Naive thymus-derived CD4-positive, alpha-beta T cell (primary cell): ENCODE measurements at regions of chr19 and their contacts with region 1.

Region 1: GRCh38 chr19:47243776-47244547 is 12.4 kb upstream of the CCDC9 start:
- DNase-seq: peak; percentile 80 to 94 (median 86)
- ATAC-seq: peak; percentile 69
- H3K4me3 ChIP-seq: peak overlapping the region; percentile 42
- H3K4me3 Mint-ChIP-seq: peak overlapping the region in 7 of 10 donors; percentile 68 to 86 (median 85)
- H3K27ac ChIP-seq: peak overlapping the region; percentile 28
- H3K27ac Mint-ChIP-seq: peak overlapping the region in 6 of 9 donors; percentile 61 to 95 (median 90)
- H3K4me1 ChIP-seq: peaks cover 35 to 37% of the 10 kb centered on the region in 2 donors
- H3K4me1 Mint-ChIP-seq: peaks cover 9 to 33% (median 25%) of the 10 kb centered on the region in 7 donors
- H3K27me3 ChIP-seq: no peaks in the 10 kb centered on the region
- H3K27me3 Mint-ChIP-seq: peaks cover 0 to 6% (median 0%) of the 10 kb centered on the region in 5 donors

Region 2: GRCh38 chr19:47047763-47048405 is 196.1 kb before region 1 on chr19:
- CTCF ChIA-PET with region 1: no interaction called
- POLR2A ChIA-PET with region 1: no interaction called
- intact Hi-C with region 1: loop called in 1 of 2 experiments (anchors 2 kb)
- DNase-seq: peak; percentile 41 to 80 (median 58)
- ATAC-seq: peak; percentile 57
- H3K4me3 ChIP-seq: peak overlapping the region; percentile 86
- H3K4me3 Mint-ChIP-seq: peak overlapping the region; percentile 89 to 100 (median 97)
- H3K27ac ChIP-seq: peak overlapping the region; percentile 79
- H3K27ac Mint-ChIP-seq: peak overlapping the region; percentile 82 to 96 (median 93)
- H3K4me1 ChIP-seq: peaks cover 6 to 7% of the 10 kb centered on the region in 2 donors
- H3K4me1 Mint-ChIP-seq: peaks cover 10 to 22% (median 16%) of the 10 kb centered on the region in 7 donors
- H3K27me3 ChIP-seq: no peaks in the 10 kb centered on the region
- H3K27me3 Mint-ChIP-seq: peaks cover 0 to 2% (median 0%) of the 10 kb centered on the region in 5 donors

Region 3: DNA sequence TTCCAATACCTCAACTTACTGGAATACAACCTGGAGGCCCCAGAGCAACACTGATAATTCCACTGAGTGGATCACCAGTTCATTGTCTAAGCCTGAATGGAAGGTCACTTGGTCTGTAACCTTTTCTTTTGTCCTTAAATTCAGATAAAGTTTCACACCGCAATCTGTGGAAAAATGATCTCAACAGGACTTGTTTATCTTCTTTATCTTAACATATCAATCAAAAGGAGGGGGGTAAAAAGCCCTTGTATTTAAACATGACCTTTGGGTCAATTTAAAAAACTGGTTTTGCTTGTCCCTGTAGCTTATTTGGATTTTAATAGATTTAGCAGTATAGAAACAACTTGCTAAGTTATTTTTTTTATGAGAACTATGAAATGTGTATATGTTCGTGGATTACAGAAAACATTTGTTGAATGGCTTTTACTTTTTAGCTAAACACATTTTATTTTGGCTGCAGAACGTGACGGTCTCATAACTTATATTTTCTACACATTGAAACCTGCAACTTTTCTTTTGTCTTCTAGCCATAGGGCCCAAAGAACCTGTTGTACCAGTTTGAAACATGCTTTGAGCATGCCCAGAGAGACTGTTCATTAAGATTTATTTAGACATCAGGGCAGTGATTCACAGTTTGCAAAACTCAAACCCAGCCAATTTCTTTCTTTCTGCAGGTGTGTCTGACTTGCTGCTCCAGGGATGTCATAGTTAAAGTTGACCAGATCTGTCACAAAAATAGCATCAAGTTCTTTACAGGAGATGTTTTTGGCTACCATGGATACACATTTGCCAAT is 91.5 kb before region 1 on chr19:
- CTCF ChIA-PET with region 1: interaction called, 175 read pairs
- POLR2A ChIA-PET with region 1: interaction called, 50 read pairs
- intact Hi-C with region 1: loop called (anchors 1 kb)
- DNase-seq: no peak
- ATAC-seq: no peak
- H3K4me3 ChIP-seq: no peak overlapping the region
- H3K4me3 Mint-ChIP-seq: no peak overlapping the region
- H3K27ac ChIP-seq: no peak overlapping the region
- H3K27ac Mint-ChIP-seq: peak overlapping the region in 3 of 9 donors; percentile 60 to 88 (median 61)
- H3K4me1 ChIP-seq: peaks cover 24 to 53% of the 10 kb centered on the region in 2 donors
- H3K4me1 Mint-ChIP-seq: peaks cover 26 to 75% (median 61%) of the 10 kb centered on the region in 7 donors
- H3K27me3 ChIP-seq: no peaks in the 10 kb centered on the region
- H3K27me3 Mint-ChIP-seq: no peaks in the 10 kb centered on the region

Region 4: GRCh38 chr19:47190167-47190727 is 53.7 kb before region 1 on chr19:
- CTCF ChIA-PET with region 1: interaction called, 13 read pairs
- POLR2A ChIA-PET with region 1: interaction called, 26 read pairs
- intact Hi-C with region 1: loop called (anchors 1 to 2 kb)
- DNase-seq: peak in 8 of 9 donors; percentile 52 to 77 (median 64)
- ATAC-seq: peak; percentile 53
- H3K4me3 ChIP-seq: no peak overlapping the region
- H3K4me3 Mint-ChIP-seq: peak overlapping the region; percentile 48 to 83 (median 72)
- H3K27ac ChIP-seq: peak overlapping the region; percentile 25
- H3K27ac Mint-ChIP-seq: peak overlapping the region; percentile 72 to 98 (median 95)
- H3K4me1 ChIP-seq: peaks cover 37 to 77% of the 10 kb centered on the region in 2 donors
- H3K4me1 Mint-ChIP-seq: peaks cover 41 to 81% (median 71%) of the 10 kb centered on the region in 7 donors
- H3K27me3 ChIP-seq: no peaks in the 10 kb centered on the region
- H3K27me3 Mint-ChIP-seq: no peaks in the 10 kb centered on the region

Region 5: DNA sequence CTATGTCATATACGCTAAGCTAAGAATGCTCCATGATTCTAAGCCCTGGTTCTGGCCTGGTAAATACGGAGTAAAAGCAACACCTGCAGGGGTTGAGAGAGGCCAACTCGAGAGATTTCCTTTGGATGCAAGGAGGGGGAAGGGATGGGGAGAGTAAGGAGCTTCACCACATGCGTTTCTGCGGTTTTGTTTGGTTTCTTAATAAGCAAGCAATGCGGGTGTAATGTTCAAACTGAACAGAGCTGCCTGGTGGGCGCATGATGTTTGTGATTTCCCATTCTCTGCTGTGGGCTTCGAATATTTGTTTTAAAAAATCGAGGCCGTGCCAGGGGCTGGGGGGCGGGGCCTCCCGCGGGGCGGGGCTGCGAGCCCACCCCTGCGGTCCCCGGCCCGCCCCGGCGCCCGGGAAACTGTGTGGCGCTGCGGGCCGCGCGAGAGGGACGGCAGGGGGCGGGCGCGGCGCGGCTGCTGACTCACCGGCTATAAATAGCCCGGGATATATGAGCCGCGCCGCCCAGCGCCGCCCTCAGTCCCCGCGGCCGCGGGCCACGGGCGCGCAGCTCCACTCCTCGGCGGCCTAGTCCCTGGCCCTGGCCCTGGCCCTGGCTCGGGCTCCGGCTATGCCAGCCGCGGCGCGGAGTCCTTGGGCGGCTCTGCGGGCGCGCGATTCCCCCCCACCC is 18.1 kb before region 1 on chr19:
- CTCF ChIA-PET with region 1: interaction called, 25 read pairs
- POLR2A ChIA-PET with region 1: interaction called, 37 read pairs
- intact Hi-C with region 1: loop called (anchors 1 kb)
- DNase-seq: peak; percentile 72 to 94 (median 82)
- ATAC-seq: peak; percentile 76
- H3K4me3 ChIP-seq: peak overlapping the region; percentile 54
- H3K4me3 Mint-ChIP-seq: peak overlapping the region; percentile 31 to 84 (median 66)
- H3K27ac ChIP-seq: peak overlapping the region; percentile 81
- H3K27ac Mint-ChIP-seq: peak overlapping the region in 8 of 9 donors; percentile 26 to 96 (median 84)
- H3K4me1 ChIP-seq: peaks cover 28 to 31% of the 10 kb centered on the region in 2 donors
- H3K4me1 Mint-ChIP-seq: peaks cover 8 to 16% (median 11%) of the 10 kb centered on the region in 7 donors
- H3K27me3 ChIP-seq: no peaks in the 10 kb centered on the region
- H3K27me3 Mint-ChIP-seq: no peaks in the 10 kb centered on the region